ENCODE measurements at regions of chr2 and their contacts with region 1.

Region 1: DNA sequence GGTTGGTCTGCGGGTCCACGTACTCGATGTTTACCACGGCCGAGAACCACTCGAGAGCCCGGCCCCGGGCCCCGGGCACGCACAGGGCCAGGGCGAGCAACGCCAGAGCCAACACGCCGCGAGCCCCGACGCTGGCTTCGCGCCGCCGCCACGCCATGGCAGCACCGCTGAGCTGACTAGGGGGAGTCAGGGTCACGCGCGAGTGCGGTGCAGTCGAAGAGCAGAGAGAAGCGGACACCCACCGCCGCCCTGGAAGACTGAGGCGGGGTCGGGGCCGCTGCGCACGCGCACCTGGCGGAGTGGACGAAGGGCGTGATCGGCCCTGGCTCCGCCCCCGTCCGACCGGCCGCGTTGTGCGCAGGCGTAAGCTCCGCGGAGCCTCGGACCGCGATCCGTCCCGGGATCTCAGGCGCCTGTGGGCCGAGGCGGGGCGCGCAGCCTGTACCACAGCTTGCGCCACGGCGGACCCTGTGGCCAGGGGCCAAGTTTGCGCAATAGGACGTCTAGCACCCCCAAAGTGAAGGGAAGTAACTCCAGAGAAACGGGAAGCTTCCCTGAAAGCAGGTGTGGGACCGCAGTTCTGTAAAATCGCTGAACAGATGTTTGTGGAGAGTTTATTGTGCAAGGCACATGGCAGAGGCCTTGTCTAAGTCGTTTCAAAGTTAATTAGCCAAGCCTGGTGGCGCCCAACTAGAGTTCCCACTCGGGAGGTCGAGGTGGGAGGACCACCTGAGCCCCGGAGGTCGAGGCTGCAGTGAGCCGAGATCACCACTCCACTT is at the start of gene RNF149:
- DNase-seq: peak; percentile 94
- H3K4me3 ChIP-seq: peak within 1 kb of the TSS; percentile 68 to 84 (median 82)
- H3K27ac ChIP-seq: peak within 1 kb of the TSS; percentile 83
- H3K4me1 ChIP-seq: peaks cover 23% of the 10 kb centered on the region
- H3K27me3 ChIP-seq: no peaks in the 10 kb centered on the region
- CTCF ChIP-seq: no peak
- POLR2A ChIP-seq: peak; percentile 95
- total RNA-seq, gene RNF149: 57.6 and 66.6 TPM in 2 replicates

Region 2: DNA sequence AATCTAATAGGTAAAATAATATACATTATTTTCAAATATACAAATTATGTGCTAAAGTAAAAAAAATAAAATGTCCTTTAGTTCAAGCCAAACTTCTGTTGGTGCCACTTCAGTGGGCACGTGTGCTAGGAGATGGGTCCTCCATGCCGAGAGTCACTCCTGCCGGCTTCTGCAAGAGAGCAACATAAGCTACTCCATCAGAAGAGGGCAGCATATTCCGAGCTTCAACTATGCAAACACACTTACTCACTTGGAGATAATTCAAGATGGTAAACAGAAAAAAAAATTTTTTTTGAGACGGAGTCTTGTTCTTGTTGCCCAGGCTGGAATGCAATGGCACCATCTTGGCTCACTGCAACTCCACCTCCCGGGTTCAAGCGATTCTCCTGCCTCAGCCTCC is 31.5 kb before region 1 on chr2:
- CTCF ChIA-PET with region 1: no interaction called
- POLR2A ChIA-PET with region 1: no interaction called
- dilution Hi-C with region 1: no loop called
- intact Hi-C with region 1: no loop called
- DNase-seq: peak; percentile 15
- H3K4me3 ChIP-seq: no peak overlapping the region
- H3K27ac ChIP-seq: no peak overlapping the region
- H3K4me1 ChIP-seq: peaks cover 3% of the 10 kb centered on the region
- H3K27me3 ChIP-seq: no peaks in the 10 kb centered on the region
- CTCF ChIP-seq: no peak
- POLR2A ChIP-seq: no peak

Region 3: GRCh38 chr2:101295895-101296294 is 12.7 kb before region 1 on chr2:
- CTCF ChIA-PET with region 1: interaction called, 12 read pairs
- POLR2A ChIA-PET with region 1: interaction called, 3 read pairs
- dilution Hi-C with region 1: no loop called
- intact Hi-C with region 1: loop called (anchors 1 kb)
- DNase-seq: peak; percentile 60
- H3K4me3 ChIP-seq: no peak overlapping the region
- H3K27ac ChIP-seq: peak overlapping the region; percentile 83
- H3K4me1 ChIP-seq: peaks cover 37% of the 10 kb centered on the region
- H3K27me3 ChIP-seq: no peaks in the 10 kb centered on the region
- CTCF ChIP-seq: no peak
- POLR2A ChIP-seq: no peak

Region 4: DNA sequence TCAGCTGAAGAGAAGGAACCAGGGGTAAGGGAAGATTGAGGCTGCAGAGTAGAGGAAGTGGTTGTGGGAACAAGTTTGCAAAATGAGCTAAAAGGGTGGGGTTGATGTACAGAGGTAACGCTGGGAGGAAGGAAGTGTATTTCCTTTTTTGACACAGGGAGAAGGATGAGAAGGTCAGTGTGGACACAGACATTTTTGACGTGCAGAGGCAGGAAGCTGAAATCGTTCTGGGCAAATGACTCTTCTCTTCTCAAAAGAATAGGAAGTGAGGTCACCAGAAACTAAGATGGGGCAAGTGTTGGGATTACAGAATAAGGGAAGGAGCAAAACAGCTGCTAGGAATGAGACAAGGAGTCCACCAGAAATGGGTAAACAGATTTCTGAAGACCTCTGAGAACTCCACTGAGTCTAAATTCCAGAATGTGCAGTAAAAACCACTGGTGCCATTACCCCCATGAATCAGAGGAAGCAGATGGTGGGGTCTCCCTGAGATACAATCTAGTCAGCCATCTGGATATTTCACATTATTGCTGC is 19.9 kb after region 1 on chr2:
- CTCF ChIA-PET with region 1: interaction called, 10 read pairs
- POLR2A ChIA-PET with region 1: interaction called, 4 read pairs
- dilution Hi-C with region 1: no loop called
- intact Hi-C with region 1: loop called (anchors 1 kb)
- DNase-seq: peak; percentile 98
- H3K4me3 ChIP-seq: peak overlapping the region in 1 of 3 experiments; percentile 1
- H3K27ac ChIP-seq: peak overlapping the region; percentile 95
- H3K4me1 ChIP-seq: peaks cover 37% of the 10 kb centered on the region
- H3K27me3 ChIP-seq: no peaks in the 10 kb centered on the region
- CTCF ChIP-seq: no peak
- POLR2A ChIP-seq: peak; percentile 82

Region 5: GRCh38 chr2:101387151-101387807 is 78.7 kb after region 1 on chr2 and contains the start of gene CREG2:
- CTCF ChIA-PET with region 1: interaction called, 3 read pairs
- POLR2A ChIA-PET with region 1: no interaction called
- dilution Hi-C with region 1: no loop called
- intact Hi-C with region 1: loop called (anchors 1 kb)
- DNase-seq: peak; percentile 74
- H3K4me3 ChIP-seq: peak within 1 kb of the TSS; percentile 32 to 54 (median 43)
- H3K27ac ChIP-seq: no peak within 1 kb of the TSS
- H3K4me1 ChIP-seq: peaks cover 19% of the 10 kb centered on the region
- H3K27me3 ChIP-seq: peaks cover 36 to 46% of the 10 kb centered on the region in 2 experiments
- CTCF ChIP-seq: peak; percentile 53 to 61
- POLR2A ChIP-seq: no peak
- total RNA-seq, gene CREG2: 0.88 and 2.0 TPM in 2 replicates